Breast epithelium (tissue), 4 donors: ENCODE measurements at regions of chr12 and their contacts with region 1.

Region 1: DNA sequence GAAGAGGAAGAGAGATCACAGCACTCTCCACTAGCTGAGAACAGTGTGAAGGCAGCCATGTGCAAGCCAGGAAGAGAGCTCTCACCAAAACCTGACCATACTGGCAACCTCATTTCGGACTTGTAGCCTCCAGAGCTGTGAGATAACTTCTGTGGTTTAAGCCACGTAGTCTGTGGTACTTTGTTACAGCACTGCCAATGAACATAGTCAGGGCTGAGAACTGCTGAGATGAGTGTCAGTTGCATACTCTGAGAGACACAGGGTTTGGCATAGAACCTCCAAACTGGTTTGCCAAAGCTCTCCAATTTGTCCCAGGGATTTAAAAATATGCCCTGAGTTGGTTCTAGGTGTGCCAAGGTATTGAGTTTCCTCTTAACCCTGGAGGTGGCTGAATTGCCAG is 218.6 kb downstream of the ATP23 start:
- DNase-seq: no peak
- H3K4me3 ChIP-seq: no peak overlapping the region
- H3K27ac ChIP-seq: no peak overlapping the region
- H3K4me1 ChIP-seq: no peaks in the 10 kb centered on the region
- H3K27me3 ChIP-seq: no peaks in the 10 kb centered on the region
- CTCF ChIP-seq: no peak
- POLR2A ChIP-seq: no peak

Region 2: DNA sequence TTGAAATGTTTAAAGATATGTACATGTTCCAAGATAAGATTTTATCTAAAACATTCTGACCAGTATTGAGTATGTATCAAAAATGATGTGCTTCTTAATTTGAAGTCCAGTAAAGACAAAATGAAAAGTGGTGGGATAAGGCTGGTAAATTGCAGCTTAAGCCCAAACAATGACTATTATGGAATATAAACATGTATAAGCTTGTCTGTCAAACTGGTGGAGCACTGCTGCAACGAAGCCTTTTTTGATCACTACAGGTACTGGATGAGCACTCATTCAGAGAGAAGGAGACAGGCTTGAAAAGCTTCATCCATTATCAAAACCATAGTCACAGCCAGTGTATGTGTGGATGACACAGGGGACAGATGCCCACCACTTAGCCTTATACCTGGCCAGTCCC is 80.1 kb before region 1 on chr12:
- intact Hi-C with region 1: no loop called
- DNase-seq: no peak
- H3K4me3 ChIP-seq: no peak overlapping the region
- H3K27ac ChIP-seq: no peak overlapping the region
- H3K4me1 ChIP-seq: no peaks in the 10 kb centered on the region
- H3K27me3 ChIP-seq: no peaks in the 10 kb centered on the region
- CTCF ChIP-seq: no peak
- POLR2A ChIP-seq: no peak

Region 3: GRCh38 chr12:59149997-59150642 is 990.2 kb after region 1 on chr12:
- intact Hi-C with region 1: loop called (anchors 10 kb)
- DNase-seq: no peak
- H3K4me3 ChIP-seq: no peak overlapping the region
- H3K27ac ChIP-seq: no peak overlapping the region
- H3K4me1 ChIP-seq: no peaks in the 10 kb centered on the region
- H3K27me3 ChIP-seq: no peaks in the 10 kb centered on the region
- CTCF ChIP-seq: peak; percentile 95 to 100 (median 99)
- POLR2A ChIP-seq: no peak